Natural killer cell (primary cell): ENCODE measurements at regions of chr20 and their contacts with region 1.

Region 1: GRCh38 chr20:34363062-34363464 is at the start of gene ITCH:
- DNase-seq: peak; percentile 89 to 95
- ATAC-seq: peak; percentile 88 to 97 (median 93)
- H3K4me3 ChIP-seq: peak within 1 kb of the TSS; percentile 94
- H3K4me3 Mint-ChIP-seq: peak within 1 kb of the TSS; percentile 100
- H3K27ac ChIP-seq: peak within 1 kb of the TSS; percentile 95
- H3K27ac Mint-ChIP-seq: peak within 1 kb of the TSS; percentile 85 to 98
- H3K4me1 ChIP-seq: peaks cover 43% of the 10 kb centered on the region
- H3K4me1 Mint-ChIP-seq: peaks cover 35 to 36% of the 10 kb centered on the region in 2 donors
- H3K27me3 ChIP-seq: no peaks in the 10 kb centered on the region
- H3K27me3 Mint-ChIP-seq: no peaks in the 10 kb centered on the region
- CTCF ChIP-seq: no peak
- total RNA-seq, gene ITCH: 157 to 182 (median 163) TPM

Region 2: DNA sequence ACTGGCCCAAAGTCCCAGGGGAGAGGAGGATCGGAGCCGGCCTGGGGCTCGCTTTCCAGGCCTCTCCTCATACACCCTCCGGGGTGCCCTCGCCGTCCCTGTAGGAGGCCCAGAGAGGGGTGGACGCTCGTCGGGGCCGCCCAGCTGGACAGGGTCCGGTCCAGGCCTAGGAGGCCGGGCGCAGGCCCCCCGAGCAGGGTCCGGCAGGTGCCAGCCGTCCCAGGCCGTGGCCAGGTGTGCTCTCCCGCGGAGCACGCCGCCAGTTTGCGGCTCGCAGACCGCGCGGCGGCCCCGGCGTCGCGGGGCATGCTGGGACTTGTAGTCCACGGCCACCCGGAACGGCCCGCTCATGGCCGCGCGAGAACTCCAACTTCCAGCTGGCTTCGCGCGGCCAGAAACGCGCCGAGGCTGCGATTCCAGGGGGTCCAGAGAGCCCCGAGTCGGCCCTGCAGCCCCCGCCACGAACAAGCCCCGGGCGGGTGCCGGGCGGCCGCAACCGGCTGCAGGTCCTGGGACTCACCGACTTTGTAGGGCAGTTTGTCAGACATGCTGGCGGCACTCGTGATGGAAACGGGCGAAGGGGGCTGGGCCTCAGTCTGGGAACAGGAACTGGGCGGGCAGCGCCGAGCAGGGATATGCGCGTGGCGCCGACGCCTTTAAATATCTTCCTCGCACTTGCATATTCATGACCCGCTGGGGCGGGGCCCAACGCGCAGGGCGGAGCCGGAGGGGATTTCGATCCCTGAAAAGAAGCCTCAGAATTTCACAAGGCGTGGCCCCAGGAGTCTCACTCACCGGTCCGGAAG is 60.1 kb before region 1 on chr20 and contains the start of gene AHCY:
- intact Hi-C with region 1: loop called (anchors 5 kb)
- DNase-seq: peak; percentile 85 to 95
- ATAC-seq: peak; percentile 90 to 96 (median 91)
- H3K4me3 ChIP-seq: peak within 1 kb of the TSS; percentile 85
- H3K4me3 Mint-ChIP-seq: peak within 1 kb of the TSS; percentile 95
- H3K27ac ChIP-seq: peak within 1 kb of the TSS; percentile 68
- H3K27ac Mint-ChIP-seq: peak within 1 kb of the TSS; percentile 88
- H3K4me1 ChIP-seq: peaks cover 14% of the 10 kb centered on the region
- H3K4me1 Mint-ChIP-seq: peaks cover 0 to 4% of the 10 kb centered on the region in 2 donors
- H3K27me3 ChIP-seq: no peaks in the 10 kb centered on the region
- H3K27me3 Mint-ChIP-seq: no peaks in the 10 kb centered on the region
- CTCF ChIP-seq: peak; percentile 33
- total RNA-seq, gene AHCY: 7.1 to 8.3 (median 7.7) TPM

Region 3: GRCh38 chr20:34337982-34338726 is 24.9 kb before region 1 on chr20:
- intact Hi-C with region 1: loop called (anchors 1 kb)
- DNase-seq: peak; percentile 36 to 74
- ATAC-seq: peak; percentile 77 to 89 (median 83)
- H3K4me3 ChIP-seq: peak overlapping the region; percentile 11
- H3K4me3 Mint-ChIP-seq: peak overlapping the region; percentile 82
- H3K27ac ChIP-seq: peak overlapping the region; percentile 81
- H3K27ac Mint-ChIP-seq: peak overlapping the region; percentile 86 to 90
- H3K4me1 ChIP-seq: peaks cover 56% of the 10 kb centered on the region
- H3K4me1 Mint-ChIP-seq: peaks cover 21 to 51% of the 10 kb centered on the region in 2 donors
- H3K27me3 ChIP-seq: no peaks in the 10 kb centered on the region
- H3K27me3 Mint-ChIP-seq: no peaks in the 10 kb centered on the region
- CTCF ChIP-seq: no peak

Region 4: DNA sequence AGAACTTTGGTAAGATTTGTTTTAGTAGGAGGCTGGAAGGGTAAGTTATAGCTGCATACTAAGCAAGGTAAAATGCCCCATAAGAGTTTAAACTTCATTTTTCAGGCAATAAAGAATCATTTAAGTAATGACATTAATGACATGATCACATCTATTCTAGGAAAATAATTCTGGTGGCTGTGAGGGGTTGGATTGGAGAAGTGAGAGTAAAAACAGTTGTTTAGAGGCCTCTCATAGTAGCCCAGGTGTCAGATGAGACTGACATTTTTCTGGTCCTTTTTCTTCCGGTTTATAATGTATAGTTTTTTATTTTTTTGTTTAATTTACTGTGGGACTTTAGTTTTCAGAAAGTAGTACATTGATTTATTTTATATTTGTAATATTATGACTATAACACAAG is 40.8 kb after region 1 on chr20:
- intact Hi-C with region 1: loop called (anchors 5 kb)
- DNase-seq: no peak
- ATAC-seq: no peak
- H3K4me3 ChIP-seq: no peak overlapping the region
- H3K4me3 Mint-ChIP-seq: peak overlapping the region; percentile 74
- H3K27ac ChIP-seq: peak overlapping the region; percentile 1
- H3K27ac Mint-ChIP-seq: peak overlapping the region; percentile 66 to 84
- H3K4me1 ChIP-seq: peaks cover 27% of the 10 kb centered on the region
- H3K4me1 Mint-ChIP-seq: peaks cover 65 to 66% of the 10 kb centered on the region in 2 donors
- H3K27me3 ChIP-seq: no peaks in the 10 kb centered on the region
- H3K27me3 Mint-ChIP-seq: no peaks in the 10 kb centered on the region
- CTCF ChIP-seq: no peak

Region 5: GRCh38 chr20:34516247-34517113 is 153.4 kb after region 1 on chr20 and contains the start of gene DYNLRB1:
- intact Hi-C with region 1: loop called (anchors 2 kb)
- DNase-seq: peak; percentile 94 to 97
- ATAC-seq: peak; percentile 83 to 92 (median 87)
- H3K4me3 ChIP-seq: peak within 1 kb of the TSS; percentile 98
- H3K4me3 Mint-ChIP-seq: peak within 1 kb of the TSS; percentile 98
- H3K27ac ChIP-seq: peak within 1 kb of the TSS; percentile 80
- H3K27ac Mint-ChIP-seq: peak within 1 kb of the TSS; percentile 94 to 98
- H3K4me1 ChIP-seq: peaks cover 22% of the 10 kb centered on the region
- H3K4me1 Mint-ChIP-seq: peaks cover 49 to 54% of the 10 kb centered on the region in 2 donors
- H3K27me3 ChIP-seq: no peaks in the 10 kb centered on the region
- H3K27me3 Mint-ChIP-seq: no peaks in the 10 kb centered on the region
- CTCF ChIP-seq: no peak
- total RNA-seq, gene DYNLRB1: 58.7 to 65.5 (median 61.4) TPM